Endothelial cell of umbilical vein (primary cell): ENCODE measurements at regions of chr6 and their contacts with region 1.

Region 1: DNA sequence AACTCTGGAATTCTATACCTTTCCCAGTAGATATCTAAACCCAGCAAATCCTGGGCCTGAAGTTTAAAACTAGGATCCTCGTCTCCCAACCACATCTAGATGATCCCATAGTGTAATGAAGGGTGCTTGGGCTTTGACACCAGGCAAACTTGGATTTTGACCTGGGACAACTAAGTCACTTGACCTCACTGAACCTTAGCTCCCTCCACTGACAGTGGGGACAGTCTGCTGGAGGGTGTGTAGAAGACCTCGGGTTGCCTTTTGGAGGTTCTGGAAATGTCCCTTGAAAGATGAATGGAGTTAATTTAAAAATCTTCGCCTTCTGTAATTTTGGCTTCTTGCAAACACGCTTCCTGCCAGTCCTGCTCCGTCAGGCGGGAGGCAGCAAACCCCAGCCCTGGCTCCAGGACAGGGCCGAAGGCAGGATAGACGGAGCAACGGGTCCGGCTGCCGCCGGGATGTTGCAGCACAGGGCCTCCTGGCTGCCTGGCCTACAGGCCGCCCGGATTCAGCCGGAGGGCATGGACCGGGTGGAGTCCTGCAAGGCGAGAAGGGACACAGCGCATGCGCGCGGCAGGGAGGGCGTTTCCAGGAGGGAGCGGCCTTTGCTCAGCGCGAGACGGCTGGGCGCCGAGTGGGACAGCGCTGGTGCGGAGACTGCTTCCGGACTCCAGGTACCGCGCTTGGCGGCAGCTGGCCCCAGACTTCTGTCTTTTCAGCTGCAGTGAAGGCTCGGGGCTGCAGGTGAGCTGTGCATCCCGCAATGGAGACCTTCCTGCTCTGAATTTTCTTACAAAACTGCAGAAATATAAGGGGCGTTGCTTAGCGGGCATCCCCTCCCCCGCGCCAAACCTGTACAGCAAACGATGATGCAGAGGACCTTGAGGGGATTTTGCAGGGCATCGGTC is at the start of gene TMEM14A:
- DNase-seq: peak; percentile 87
- H3K4me3 ChIP-seq: peak within 1 kb of the TSS; percentile 32 to 61 (median 52)
- H3K27ac ChIP-seq: no peak within 1 kb of the TSS
- H3K4me1 ChIP-seq: peaks cover 8% of the 10 kb centered on the region
- H3K27me3 ChIP-seq: no peaks in the 10 kb centered on the region
- CTCF ChIP-seq: no peak
- POLR2A ChIP-seq: peak; percentile 86
- total RNA-seq, gene TMEM14A: 19.5 and 22.5 TPM in 2 replicates

Region 2: GRCh38 chr6:52271852-52272460 is 398.8 kb before region 1 on chr6:
- CTCF ChIA-PET with region 1: no interaction called
- POLR2A ChIA-PET with region 1: no interaction called
- dilution Hi-C with region 1: loop called (anchors 10 kb)
- intact Hi-C with region 1: loop called (anchors 5 kb)
- DNase-seq: peak; percentile 85
- H3K4me3 ChIP-seq: no peak overlapping the region
- H3K27ac ChIP-seq: peak overlapping the region; percentile 65
- H3K4me1 ChIP-seq: peaks cover 24% of the 10 kb centered on the region
- H3K27me3 ChIP-seq: no peaks in the 10 kb centered on the region
- CTCF ChIP-seq: no peak
- POLR2A ChIP-seq: no peak

Region 3: DNA sequence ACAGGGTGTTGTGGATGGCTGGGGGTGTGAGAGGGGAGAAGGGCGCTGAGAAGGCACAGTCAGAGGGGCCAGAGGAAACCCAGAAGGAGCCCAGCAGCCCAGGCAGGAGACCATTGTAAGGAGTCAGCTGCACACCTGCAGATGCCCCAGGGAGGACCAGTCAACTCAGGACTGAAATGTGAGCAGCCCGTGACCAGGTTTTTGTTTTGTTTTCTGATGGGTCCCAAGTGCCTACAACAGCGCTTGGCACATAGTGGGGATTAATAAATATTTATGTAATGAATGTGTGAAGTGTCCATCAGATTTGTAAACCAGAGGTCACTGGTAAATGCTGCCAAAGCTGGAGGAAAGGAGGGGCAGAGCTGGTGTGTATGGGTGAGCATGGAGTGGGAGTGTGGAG is 124.1 kb before region 1 on chr6:
- CTCF ChIA-PET with region 1: no interaction called
- POLR2A ChIA-PET with region 1: no interaction called
- dilution Hi-C with region 1: no loop called
- intact Hi-C with region 1: no loop called
- DNase-seq: no peak
- H3K4me3 ChIP-seq: no peak overlapping the region
- H3K27ac ChIP-seq: no peak overlapping the region
- H3K4me1 ChIP-seq: peaks cover 80% of the 10 kb centered on the region
- H3K27me3 ChIP-seq: no peaks in the 10 kb centered on the region
- CTCF ChIP-seq: no peak
- POLR2A ChIP-seq: no peak

Region 4: GRCh38 chr6:52686878-52687699 is 16.3 kb after region 1 on chr6:
- CTCF ChIA-PET with region 1: no interaction called
- POLR2A ChIA-PET with region 1: no interaction called
- dilution Hi-C with region 1: no loop called
- intact Hi-C with region 1: no loop called
- DNase-seq: no peak
- H3K4me3 ChIP-seq: no peak overlapping the region
- H3K27ac ChIP-seq: no peak overlapping the region
- H3K4me1 ChIP-seq: no peaks in the 10 kb centered on the region
- H3K27me3 ChIP-seq: no peaks in the 10 kb centered on the region
- CTCF ChIP-seq: no peak
- POLR2A ChIP-seq: no peak